ENCODE measurements at regions of chr22 and their contacts with region 1.

Region 1: DNA sequence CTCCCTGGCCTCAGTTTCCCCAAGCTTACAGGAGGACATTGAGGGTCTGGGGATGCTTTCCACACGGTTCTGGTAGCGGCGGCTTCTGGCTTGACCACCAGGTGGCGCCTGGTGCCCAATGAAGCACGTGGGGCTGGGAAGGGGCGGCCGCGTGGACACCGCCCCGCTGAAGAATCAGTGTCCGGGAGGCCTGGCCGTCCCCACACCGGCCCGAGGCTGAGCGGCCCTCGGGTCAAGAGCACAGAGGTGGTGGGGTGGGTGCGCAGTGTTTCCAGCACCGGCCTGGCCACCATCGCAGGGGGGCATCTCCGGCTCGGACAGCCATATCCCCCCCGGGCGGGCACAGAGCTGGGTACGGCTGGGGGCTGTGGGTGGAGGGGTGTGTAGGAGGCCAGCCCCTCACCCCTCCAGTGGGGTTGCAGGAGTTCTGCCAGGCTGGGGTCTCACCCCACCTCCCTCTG is 27.8 kb upstream of the PPARA start:
- DNase-seq: peak; percentile 46
- ATAC-seq: peak; percentile 89
- H3K4me3 ChIP-seq: no peak overlapping the region
- H3K27ac ChIP-seq: no peak overlapping the region
- H3K4me1 ChIP-seq: peaks cover 8% of the 10 kb centered on the region
- H3K27me3 ChIP-seq: no peaks in the 10 kb centered on the region
- CTCF ChIP-seq: peak; percentile 80
- POLR2A ChIP-seq: no peak
- RAD21 ChIP-seq: peak; percentile 85

Region 2: GRCh38 chr22:46296257-46297150 is 174.0 kb after region 1 on chr22 and contains the start of gene GTSE1:
- CTCF ChIA-PET with region 1: no interaction called
- POLR2A ChIA-PET with region 1: no interaction called
- dilution Hi-C with region 1: no loop called
- in situ Hi-C with region 1: loop called (anchors 5 kb)
- intact Hi-C with region 1: loop called (anchors 5 kb)
- DNase-seq: peak; percentile 96
- ATAC-seq: peak; percentile 98
- H3K4me3 ChIP-seq: peak within 1 kb of the TSS; percentile 47
- H3K27ac ChIP-seq: peak within 1 kb of the TSS; percentile 71
- H3K4me1 ChIP-seq: peaks cover 11% of the 10 kb centered on the region
- H3K27me3 ChIP-seq: no peaks in the 10 kb centered on the region
- CTCF ChIP-seq: peak; percentile 32; the same call in 1 of the 2 replicates
- POLR2A ChIP-seq: no peak
- RAD21 ChIP-seq: peak; percentile 42; the same call in 1 of the 2 replicates
- total RNA-seq, gene GTSE1: 5.8 and 5.9 TPM in 2 replicates